CD8-positive, alpha-beta memory T cell (primary cell): ENCODE measurements at regions of chr2 and their contacts with region 1.

Region 1: DNA sequence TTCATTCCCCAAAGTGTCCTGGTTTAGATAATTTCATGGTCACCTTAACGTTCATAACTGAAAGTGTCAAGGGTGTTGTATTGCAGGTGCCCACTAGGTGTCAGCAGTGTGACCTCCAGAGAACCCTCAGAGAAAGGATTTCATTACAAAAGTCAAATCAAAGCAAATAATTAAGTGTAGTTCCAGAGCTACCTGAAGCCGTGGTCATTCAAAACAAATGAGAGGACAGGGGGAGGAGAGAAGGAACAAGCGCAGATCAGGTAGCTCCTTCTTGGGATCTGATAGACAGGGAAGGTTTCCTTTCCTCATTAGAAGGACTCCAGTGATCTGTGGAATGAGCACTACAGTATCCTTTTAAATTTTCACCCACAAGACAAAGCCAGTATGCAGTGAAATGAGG is at the start of gene SLC9A4:
- DNase-seq: peak; percentile 21 to 53 (median 30)
- H3K4me3 ChIP-seq: no peak within 1 kb of the TSS
- H3K4me3 Mint-ChIP-seq: no peak within 1 kb of the TSS
- H3K27ac ChIP-seq: no peak within 1 kb of the TSS
- H3K27ac Mint-ChIP-seq: no peak within 1 kb of the TSS
- H3K4me1 ChIP-seq: no peaks in the 10 kb centered on the region
- H3K4me1 Mint-ChIP-seq: no peaks in the 10 kb centered on the region
- H3K27me3 ChIP-seq: no peaks in the 10 kb centered on the region
- H3K27me3 Mint-ChIP-seq: peaks cover 20 to 47% of the 10 kb centered on the region in 2 donors
- total RNA-seq, gene SLC9A4: not detected

Region 2: GRCh38 chr2:102461188-102461587 is 11.8 kb before region 1 on chr2:
- CTCF ChIA-PET with region 1: interaction called, 11 read pairs
- POLR2A ChIA-PET with region 1: no interaction called
- DNase-seq: no peak
- H3K4me3 ChIP-seq: no peak overlapping the region
- H3K4me3 Mint-ChIP-seq: no peak overlapping the region
- H3K27ac ChIP-seq: no peak overlapping the region
- H3K27ac Mint-ChIP-seq: no peak overlapping the region
- H3K4me1 ChIP-seq: no peaks in the 10 kb centered on the region
- H3K4me1 Mint-ChIP-seq: no peaks in the 10 kb centered on the region
- H3K27me3 ChIP-seq: no peaks in the 10 kb centered on the region
- H3K27me3 Mint-ChIP-seq: peaks cover 2 to 18% of the 10 kb centered on the region in 2 donors

Region 3: DNA sequence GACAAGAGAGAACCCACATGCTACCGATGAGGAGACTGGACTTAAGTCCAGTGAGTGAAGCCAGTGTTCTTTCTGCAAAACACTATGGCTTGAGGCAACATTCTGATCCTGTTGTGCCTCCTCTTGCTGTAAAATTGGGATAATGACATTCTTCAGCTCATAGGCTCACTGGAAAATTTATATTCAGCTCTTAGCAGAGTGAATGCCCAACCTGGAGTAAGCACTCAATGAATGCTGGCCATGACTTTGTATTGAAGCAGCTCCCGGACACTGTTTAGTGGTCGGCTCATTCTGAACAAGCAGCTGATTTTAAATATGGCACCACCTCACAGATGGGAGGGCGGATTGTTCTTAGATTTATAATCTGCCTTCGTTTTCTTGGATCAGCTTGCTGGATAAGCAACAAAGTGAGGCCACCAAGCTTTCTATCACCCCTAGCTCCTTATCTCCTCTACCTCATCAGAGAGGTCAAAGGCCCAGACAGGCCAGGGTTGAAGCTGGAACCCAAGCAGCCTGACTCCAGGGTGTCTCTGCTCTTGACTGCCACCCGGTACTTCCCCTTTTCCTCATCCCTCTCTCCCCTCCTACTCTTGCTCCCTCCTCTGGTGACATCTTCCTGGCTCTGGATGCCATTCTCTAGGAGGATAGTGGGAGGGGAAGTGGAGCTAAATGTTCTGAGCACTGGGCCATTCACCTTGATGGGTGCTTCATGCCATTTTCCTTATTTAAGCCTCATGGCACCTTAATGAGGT is 11.5 kb after region 1 on chr2:
- CTCF ChIA-PET with region 1: interaction called, 10 read pairs
- POLR2A ChIA-PET with region 1: no interaction called
- DNase-seq: no peak
- H3K4me3 ChIP-seq: no peak overlapping the region
- H3K4me3 Mint-ChIP-seq: no peak overlapping the region
- H3K27ac ChIP-seq: no peak overlapping the region
- H3K27ac Mint-ChIP-seq: no peak overlapping the region
- H3K4me1 ChIP-seq: no peaks in the 10 kb centered on the region
- H3K4me1 Mint-ChIP-seq: peaks cover under 1 to 8% (median 2%) of the 10 kb centered on the region in 3 donors
- H3K27me3 ChIP-seq: no peaks in the 10 kb centered on the region
- H3K27me3 Mint-ChIP-seq: peaks cover 6 to 41% of the 10 kb centered on the region in 2 donors

Region 4: DNA sequence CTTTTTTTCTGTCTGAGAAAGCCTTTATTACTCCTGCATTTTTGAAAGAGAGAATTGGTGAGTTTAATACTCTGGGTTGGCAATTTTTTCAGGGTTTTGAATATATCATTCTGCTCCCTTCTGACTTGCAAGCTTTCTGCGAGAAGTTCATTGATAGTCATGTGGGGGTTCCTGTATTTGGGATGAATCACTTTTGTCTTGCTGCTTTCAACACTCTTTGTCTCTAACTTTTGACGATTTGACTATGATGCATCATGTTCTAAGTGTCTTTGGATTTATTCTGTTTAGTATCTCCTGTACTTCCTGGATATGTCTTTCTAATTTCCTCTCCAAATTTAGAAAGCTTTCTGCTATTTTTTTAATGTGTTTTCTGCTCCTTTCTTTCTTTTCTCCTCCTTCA is 105.4 kb after region 1 on chr2:
- CTCF ChIA-PET with region 1: no interaction called
- POLR2A ChIA-PET with region 1: no interaction called
- DNase-seq: no peak
- H3K4me3 ChIP-seq: no peak overlapping the region
- H3K4me3 Mint-ChIP-seq: no peak overlapping the region
- H3K27ac ChIP-seq: no peak overlapping the region
- H3K27ac Mint-ChIP-seq: no peak overlapping the region
- H3K4me1 ChIP-seq: no peaks in the 10 kb centered on the region
- H3K4me1 Mint-ChIP-seq: peaks cover 0 to 9% (median 4%) of the 10 kb centered on the region in 3 donors
- H3K27me3 ChIP-seq: no peaks in the 10 kb centered on the region
- H3K27me3 Mint-ChIP-seq: peaks cover 6 to 29% of the 10 kb centered on the region in 2 donors